ENCODE measurements at regions of chr14 and their contacts with region 1.

Region 1: GRCh38 chr14:23186913-23187654 is 3.6 kb upstream of the SLC7A8 start:
- DNase-seq: peak in 25 of 42 donors; percentile 33 to 81 (median 54)

Region 2: DNA sequence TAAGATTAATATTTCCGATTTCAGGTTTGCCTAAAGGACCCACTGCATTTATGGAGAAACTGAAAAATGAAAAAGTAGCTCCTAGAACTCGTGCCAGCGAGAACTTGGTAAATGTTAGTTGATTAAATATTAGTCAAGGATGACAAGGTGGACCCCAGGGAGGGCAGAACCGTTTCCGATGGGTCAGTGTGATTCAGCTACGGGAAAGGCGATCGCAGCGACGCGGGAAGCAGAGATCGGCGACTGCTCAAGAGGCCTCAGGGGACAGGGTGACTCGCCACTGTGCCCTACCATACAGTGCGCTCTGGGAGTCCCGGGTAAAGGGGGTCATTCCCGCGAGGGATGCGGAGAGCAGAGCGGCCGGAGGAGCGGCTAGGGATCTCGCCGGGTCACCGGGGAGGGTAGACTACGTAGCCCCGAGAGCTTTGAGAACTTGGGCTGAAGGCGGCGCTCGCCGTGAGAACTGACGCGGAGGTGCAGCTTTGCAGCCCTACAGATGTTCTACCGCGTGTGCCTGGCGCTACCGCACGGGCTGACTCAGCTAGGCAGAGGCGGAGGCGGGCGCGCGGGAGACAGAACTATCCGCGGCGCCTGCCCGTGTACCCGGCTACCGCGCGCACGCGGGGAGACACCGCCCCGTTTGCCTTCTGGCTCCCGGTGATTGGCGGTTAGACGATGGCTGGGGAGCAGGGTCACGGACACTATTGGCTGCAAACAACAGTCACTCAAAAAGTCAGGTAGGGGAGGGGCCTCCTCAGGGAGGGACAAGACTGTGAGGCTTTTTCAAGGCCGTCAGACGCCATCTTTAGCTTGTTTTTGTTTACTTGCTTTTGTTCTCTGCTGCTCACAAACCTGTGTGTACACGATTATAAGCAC is 180.3 kb before region 1 on chr14:
- intact Hi-C with region 1: no loop called
- DNase-seq: peak; percentile 96 to 99 (median 98)

Region 3: GRCh38 chr14:23041729-23042128 is 145.4 kb before region 1 on chr14:
- intact Hi-C with region 1: no loop called
- DNase-seq: no peak

Region 4: DNA sequence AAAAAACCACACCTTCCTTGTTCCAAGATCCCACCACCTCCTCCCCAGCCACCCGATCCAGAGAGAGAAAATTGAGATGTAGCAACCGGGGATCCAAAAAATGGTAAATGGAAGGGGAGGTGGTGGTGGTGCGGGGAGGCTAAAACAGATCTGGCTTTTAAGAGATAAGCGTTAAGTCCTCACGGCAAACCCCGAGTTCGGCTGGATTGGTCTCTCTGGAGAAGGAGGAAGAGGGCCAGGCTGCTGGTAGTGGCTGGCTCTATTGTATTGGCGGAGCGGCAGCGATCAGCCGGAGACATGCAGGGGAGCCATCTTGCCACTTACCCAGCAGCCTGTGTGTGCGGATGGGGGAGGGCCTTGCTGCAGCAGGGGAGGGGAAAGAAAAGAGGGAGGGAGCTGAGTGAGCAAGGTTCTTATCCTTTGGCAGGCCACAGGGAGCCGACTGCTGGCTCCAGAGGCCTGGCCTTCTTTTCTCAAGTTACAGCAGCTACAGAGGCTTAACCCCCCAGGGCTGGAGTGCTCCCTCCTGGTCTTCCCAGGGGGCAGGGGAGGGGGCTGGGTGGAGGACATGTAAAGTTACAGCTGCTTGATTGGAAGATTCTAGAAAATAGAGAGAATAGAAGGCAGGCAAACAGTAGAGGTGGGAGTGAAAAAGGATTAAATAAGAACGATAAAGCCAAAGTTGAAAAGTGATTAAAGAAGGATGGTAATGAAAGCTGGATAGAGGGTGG is 115.7 kb before region 1 on chr14:
- intact Hi-C with region 1: loop called (anchors 10 kb)
- DNase-seq: peak; percentile 67 to 96 (median 87)

Region 5: GRCh38 chr14:23120541-23121251 is 66.4 kb before region 1 on chr14:
- intact Hi-C with region 1: loop called (anchors 2 kb)
- DNase-seq: peak; percentile 86 to 96 (median 91)